ENCODE measurements at regions of chr14 and their contacts with region 1.

Region 1: GRCh38 chr14:93906341-93907329 is 20.5 kb upstream of the FAM181A start:
- DNase-seq: peak; percentile 48 to 77 (median 66)
- H3K4me3 ChIP-seq: no peak overlapping the region
- H3K27ac ChIP-seq: no peak overlapping the region
- H3K4me1 ChIP-seq: peaks cover 0 to 3% (median 0%) of the 10 kb centered on the region in 3 donors
- H3K27me3 ChIP-seq: no peaks in the 10 kb centered on the region
- CTCF ChIP-seq: peak; percentile 57

Region 2: DNA sequence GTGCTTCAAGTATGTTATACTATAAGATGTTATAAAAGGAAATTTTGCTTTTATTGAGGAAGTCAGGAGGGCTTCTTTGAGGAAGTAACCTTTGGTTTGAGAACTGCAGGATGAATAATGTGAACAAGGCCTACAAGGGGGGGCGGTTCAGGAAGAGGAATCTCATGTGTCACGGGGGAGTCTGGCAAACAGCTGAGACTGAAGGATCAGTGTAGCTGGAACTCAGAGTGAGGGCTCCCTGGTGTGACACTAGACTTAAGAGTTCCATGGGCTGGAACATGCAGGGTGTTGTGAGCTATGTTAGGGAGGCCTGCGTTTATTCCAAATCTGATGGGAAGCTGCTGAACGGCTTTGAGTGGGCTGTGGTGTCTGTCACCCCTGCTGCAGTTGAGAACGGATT is 413.6 kb before region 1 on chr14:
- intact Hi-C with region 1: no loop called
- DNase-seq: peak in 4 of 5 donors; percentile 31 to 68 (median 51)
- H3K4me3 ChIP-seq: no peak overlapping the region
- H3K27ac ChIP-seq: no peak overlapping the region
- H3K4me1 ChIP-seq: no peaks in the 10 kb centered on the region
- H3K27me3 ChIP-seq: no peaks in the 10 kb centered on the region
- CTCF ChIP-seq: no peak

Region 3: GRCh38 chr14:93655078-93655750 is 251.4 kb before region 1 on chr14:
- intact Hi-C with region 1: loop called (anchors 10 kb)
- DNase-seq: peak in 4 of 5 donors; percentile 46 to 92 (median 74)
- H3K4me3 ChIP-seq: no peak overlapping the region
- H3K27ac ChIP-seq: no peak overlapping the region
- H3K4me1 ChIP-seq: no peaks in the 10 kb centered on the region
- H3K27me3 ChIP-seq: no peaks in the 10 kb centered on the region
- CTCF ChIP-seq: peak; percentile 68